ENCODE measurements at regions of chr1 and their contacts with region 1.

Region 1: GRCh38 chr1:941588-942383 is 17.3 kb downstream of the NOC2L start:
- DNase-seq: peak in 1 of 10 donors; percentile 13
- ATAC-seq: peak; percentile 11 to 21
- H3K4me3 Mint-ChIP-seq: peak overlapping the region; percentile 56 to 86 (median 76)
- H3K27ac Mint-ChIP-seq: no peak overlapping the region
- H3K4me1 Mint-ChIP-seq: peaks cover 5 to 12% (median 9%) of the 10 kb centered on the region in 4 donors
- H3K27me3 Mint-ChIP-seq: peaks cover 2 to 33% (median 17%) of the 10 kb centered on the region in 5 donors

Region 2: DNA sequence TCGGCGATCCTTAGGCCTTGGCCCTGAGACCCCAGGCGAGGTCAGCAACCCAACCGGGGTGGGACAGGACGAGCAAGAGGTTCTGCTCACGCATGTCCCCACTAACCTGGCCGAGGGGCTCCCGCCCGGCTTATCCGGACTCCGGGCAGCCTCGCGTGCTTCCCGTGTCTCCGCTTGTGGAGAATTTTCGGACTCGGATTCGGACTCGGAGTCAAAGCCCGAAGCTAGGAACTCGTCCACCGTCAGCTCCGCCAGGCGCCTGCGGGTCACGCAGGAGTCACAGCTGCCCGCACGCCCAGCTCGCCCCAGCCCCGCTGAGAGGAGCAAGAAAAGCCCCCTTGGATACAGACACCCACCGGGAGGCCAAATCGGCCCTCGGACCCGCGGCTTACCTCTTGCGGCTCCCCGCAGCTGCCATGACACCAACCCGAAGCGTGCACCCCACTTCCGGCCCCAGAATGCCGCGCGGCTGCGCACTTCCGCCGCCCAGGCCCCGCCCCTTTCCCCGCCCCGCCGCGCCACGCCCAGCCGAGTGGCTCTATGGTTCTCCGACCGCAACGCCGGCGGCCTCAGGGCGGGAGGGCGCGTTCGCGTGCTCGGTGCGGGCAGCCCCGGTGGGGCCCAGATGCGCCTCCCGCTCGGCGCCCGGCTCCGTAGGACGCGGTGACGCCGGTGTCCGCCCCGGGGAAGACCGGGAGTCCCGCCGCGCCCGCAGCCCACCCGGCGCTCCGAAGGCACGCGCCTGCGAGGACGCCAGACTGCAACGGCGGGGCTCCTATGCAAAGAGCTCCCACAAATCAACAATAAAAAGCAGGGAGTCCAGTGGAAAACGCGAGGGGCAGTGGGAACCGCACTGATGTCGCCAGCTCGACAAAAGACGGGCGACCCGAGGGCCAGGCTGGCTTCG is 17.3 kb after region 1 on chr1 and contains the start of gene NOC2L:
- POLR2A ChIA-PET with region 1: interaction called, 16 read pairs
- DNase-seq: peak; percentile 85 to 97 (median 94)
- ATAC-seq: peak; percentile 79 to 85
- H3K4me3 Mint-ChIP-seq: peak within 1 kb of the TSS; percentile 86 to 94 (median 90)
- H3K27ac Mint-ChIP-seq: peak within 1 kb of the TSS; percentile 67 to 91 (median 87)
- H3K4me1 Mint-ChIP-seq: peaks cover 9 to 26% (median 21%) of the 10 kb centered on the region in 4 donors
- H3K27me3 Mint-ChIP-seq: no peaks in the 10 kb centered on the region
- polyA plus RNA-seq, gene NOC2L: 49.5 to 68.2 (median 60.5) TPM

Region 3: GRCh38 chr1:973468-974207 is 31.9 kb after region 1 on chr1:
- POLR2A ChIA-PET with region 1: no interaction called
- DNase-seq: no peak
- ATAC-seq: no peak
- H3K4me3 Mint-ChIP-seq: no peak overlapping the region
- H3K27ac Mint-ChIP-seq: peak overlapping the region in 1 of 10 donors; percentile 83
- H3K4me1 Mint-ChIP-seq: peaks cover 6 to 7% (median 7%) of the 10 kb centered on the region in 4 donors
- H3K27me3 Mint-ChIP-seq: peaks cover 9 to 45% (median 19%) of the 10 kb centered on the region in 5 donors

Region 4: GRCh38 chr1:983799-984473 is 42.1 kb after region 1 on chr1:
- POLR2A ChIA-PET with region 1: no interaction called
- DNase-seq: peak in 8 of 10 donors; percentile 55 to 79 (median 61)
- ATAC-seq: peak; percentile 81 to 89
- H3K4me3 Mint-ChIP-seq: no peak overlapping the region
- H3K27ac Mint-ChIP-seq: no peak overlapping the region
- H3K4me1 Mint-ChIP-seq: peaks cover 0 to 4% (median 0%) of the 10 kb centered on the region in 4 donors
- H3K27me3 Mint-ChIP-seq: peaks cover 8 to 43% (median 17%) of the 10 kb centered on the region in 5 donors

Measured in naive thymus-derived CD8-positive, alpha-beta T cell (primary cell).